Dorsolateral prefrontal cortex (tissue), 120 donors: ENCODE measurements at regions of chr5 and their contacts with region 1.

Region 1: DNA sequence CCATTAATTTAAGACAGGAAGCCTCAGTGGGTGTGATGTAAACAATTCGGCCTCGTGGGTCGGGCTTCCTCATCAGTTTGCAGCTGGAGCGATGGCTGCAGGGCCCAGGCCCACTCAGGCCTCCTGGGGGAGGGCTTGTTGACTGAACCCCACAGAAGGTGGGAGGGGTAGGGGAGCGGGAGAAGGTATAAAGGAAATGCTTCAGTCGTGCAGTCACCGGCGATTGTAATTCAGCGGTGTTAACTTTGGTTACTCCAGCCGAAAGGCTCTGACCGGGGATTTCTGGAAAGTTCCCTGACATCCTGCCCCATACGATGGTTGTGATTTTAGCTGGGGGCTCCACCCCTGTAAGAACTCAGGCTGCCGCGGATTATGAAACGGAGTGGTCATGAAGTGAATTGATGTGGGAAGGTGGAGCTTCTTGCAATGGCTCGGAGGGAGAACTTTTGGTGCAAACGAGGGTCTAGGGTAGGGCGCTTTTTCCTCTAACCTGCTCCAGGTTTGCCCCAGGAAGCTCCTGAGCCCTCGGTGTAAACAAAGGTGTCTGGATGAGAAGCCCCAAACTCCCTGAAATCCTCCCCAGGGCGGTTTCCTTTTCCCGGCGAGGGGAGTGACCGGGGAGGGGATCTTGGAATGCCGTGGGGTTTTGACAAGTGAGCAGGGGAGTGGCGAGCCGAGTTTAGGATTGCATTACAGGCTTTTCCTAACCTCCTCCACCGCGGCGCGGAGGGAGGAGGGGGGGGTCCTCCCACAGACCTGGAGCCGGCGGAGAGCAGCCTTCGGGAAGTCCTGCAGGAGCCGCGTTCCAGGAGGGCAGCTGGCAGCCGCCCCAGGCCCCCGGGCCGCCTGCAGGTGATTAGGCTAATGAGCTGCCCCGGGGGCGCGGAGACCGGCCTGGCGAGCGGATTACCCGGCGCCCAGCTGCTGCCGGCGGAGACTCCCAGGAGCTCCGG is 215.5 kb downstream of the PDZD2 start:
- DNase-seq: peak in 4 of 10 donors; percentile 34 to 57 (median 50)
- H3K4me3 ChIP-seq: peak overlapping the region; percentile 38 to 93 (median 75)
- H3K27ac ChIP-seq: peak overlapping the region; percentile 2 to 93 (median 79)
- H3K27me3 ChIP-seq: peaks cover 0 to 3% (median 0%) of the 10 kb centered on the region in 45 donors
- CTCF ChIP-seq: no peak

Region 2: GRCh38 chr5:31894141-31894540 is 39.7 kb after region 1 on chr5:
- intact Hi-C with region 1: loop called in 1 of 2 experiments (anchors 5 kb)
- DNase-seq: peak in 3 of 10 donors; percentile 30 to 54 (median 39)
- H3K4me3 ChIP-seq: peak overlapping the region in 1 of 59 donors; percentile 8
- H3K27ac ChIP-seq: peak overlapping the region in 47 of 59 donors; percentile 2 to 98 (median 66)
- H3K27me3 ChIP-seq: no peaks in the 10 kb centered on the region
- CTCF ChIP-seq: no peak

Region 3: GRCh38 chr5:31935702-31936369 is 81.4 kb after region 1 on chr5:
- intact Hi-C with region 1: no loop called
- DNase-seq: no peak
- H3K4me3 ChIP-seq: peak overlapping the region in 33 of 59 donors; percentile 0 to 45 (median 32)
- H3K27ac ChIP-seq: peak overlapping the region in 9 of 59 donors; percentile 7 to 48 (median 30)
- H3K27me3 ChIP-seq: no peaks in the 10 kb centered on the region
- CTCF ChIP-seq: no peak